Activated CD4-positive, alpha-beta T cell treated with anti-CD3 and anti-CD28 coated beads, Interleukin-2, amount 10 ng/mL, durations not matched to agents 24 days and 14 days (primary cell): ENCODE measurements at regions of chr17 and their contacts with region 1.

Region 1: GRCh38 chr17:63697341-63698286 is 2.3 kb downstream of the LIMD2 start:
- DNase-seq: peak; percentile 94
- H3K4me3 Mint-ChIP-seq: peak overlapping the region; percentile 93
- H3K27ac Mint-ChIP-seq: peak overlapping the region; percentile 93
- H3K4me1 Mint-ChIP-seq: peaks cover 43% of the 10 kb centered on the region
- H3K27me3 Mint-ChIP-seq: no peaks in the 10 kb centered on the region

Region 2: GRCh38 chr17:63512896-63513644 is 184.5 kb before region 1 on chr17:
- intact Hi-C with region 1: no loop called
- DNase-seq: no peak
- H3K4me3 Mint-ChIP-seq: no peak overlapping the region
- H3K27ac Mint-ChIP-seq: no peak overlapping the region
- H3K4me1 Mint-ChIP-seq: peaks cover 6% of the 10 kb centered on the region
- H3K27me3 Mint-ChIP-seq: peaks cover 3% of the 10 kb centered on the region

Region 3: GRCh38 chr17:63621766-63622519 is 75.7 kb before region 1 on chr17 and contains the start of gene MAP3K3:
- intact Hi-C with region 1: loop called (anchors 1 kb)
- DNase-seq: peak; percentile 99
- H3K4me3 Mint-ChIP-seq: peak within 1 kb of the TSS; percentile 99
- H3K27ac Mint-ChIP-seq: peak within 1 kb of the TSS; percentile 96
- H3K4me1 Mint-ChIP-seq: peaks cover 30% of the 10 kb centered on the region
- H3K27me3 Mint-ChIP-seq: peaks cover 11% of the 10 kb centered on the region
- total RNA-seq, gene MAP3K3: 26.2 and 26.7 TPM in 2 replicates

Region 4: DNA sequence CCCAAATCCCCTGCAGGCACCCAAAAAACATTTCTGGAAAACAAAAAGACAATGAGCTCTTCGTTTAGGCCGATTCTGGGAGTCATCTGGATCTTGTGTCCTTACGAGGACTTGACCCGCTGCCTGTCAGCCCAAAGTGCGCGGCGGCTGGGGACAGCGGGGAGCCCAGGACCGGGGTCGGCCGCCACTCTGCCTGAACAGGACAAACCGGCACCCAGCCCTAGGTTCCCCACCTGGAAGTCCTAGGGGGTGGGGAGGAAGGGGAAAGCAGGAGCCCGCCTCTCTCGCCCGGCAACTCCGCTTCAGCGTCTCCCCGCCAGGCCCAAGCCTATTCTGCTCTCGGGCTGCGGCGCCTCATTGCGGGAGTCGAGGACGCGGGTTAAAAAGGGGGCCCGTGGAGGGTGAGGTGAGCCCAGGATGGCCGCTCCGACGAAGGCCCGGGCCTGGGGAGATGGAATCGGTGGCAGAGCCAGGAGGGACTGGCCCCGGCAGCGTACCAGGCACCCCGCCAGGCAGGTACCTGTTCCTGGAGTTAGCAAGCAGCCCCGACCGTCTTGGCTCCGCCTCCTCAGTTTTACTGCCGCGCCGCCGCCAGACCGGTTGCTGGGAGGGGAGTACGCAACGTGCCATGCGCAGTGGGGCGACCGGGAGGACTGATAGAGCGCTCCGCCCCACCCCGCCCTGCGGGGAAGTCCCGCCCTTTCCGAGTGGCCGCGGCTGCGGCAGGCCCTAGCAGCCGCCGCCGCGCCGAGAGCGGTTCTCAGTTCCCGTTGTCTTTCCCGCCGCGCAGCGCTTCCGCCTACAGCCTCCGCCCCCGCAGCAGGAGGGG is 43.8 kb after region 1 on chr17 and contains the start of gene STRADA:
- intact Hi-C with region 1: loop called (anchors 1 kb)
- DNase-seq: peak; percentile 100
- H3K4me3 Mint-ChIP-seq: peak within 1 kb of the TSS; percentile 92
- H3K27ac Mint-ChIP-seq: peak within 1 kb of the TSS; percentile 96
- H3K4me1 Mint-ChIP-seq: peaks cover 26% of the 10 kb centered on the region
- H3K27me3 Mint-ChIP-seq: no peaks in the 10 kb centered on the region
- total RNA-seq, gene STRADA: 50.4 and 54.6 TPM in 2 replicates

Region 5: DNA sequence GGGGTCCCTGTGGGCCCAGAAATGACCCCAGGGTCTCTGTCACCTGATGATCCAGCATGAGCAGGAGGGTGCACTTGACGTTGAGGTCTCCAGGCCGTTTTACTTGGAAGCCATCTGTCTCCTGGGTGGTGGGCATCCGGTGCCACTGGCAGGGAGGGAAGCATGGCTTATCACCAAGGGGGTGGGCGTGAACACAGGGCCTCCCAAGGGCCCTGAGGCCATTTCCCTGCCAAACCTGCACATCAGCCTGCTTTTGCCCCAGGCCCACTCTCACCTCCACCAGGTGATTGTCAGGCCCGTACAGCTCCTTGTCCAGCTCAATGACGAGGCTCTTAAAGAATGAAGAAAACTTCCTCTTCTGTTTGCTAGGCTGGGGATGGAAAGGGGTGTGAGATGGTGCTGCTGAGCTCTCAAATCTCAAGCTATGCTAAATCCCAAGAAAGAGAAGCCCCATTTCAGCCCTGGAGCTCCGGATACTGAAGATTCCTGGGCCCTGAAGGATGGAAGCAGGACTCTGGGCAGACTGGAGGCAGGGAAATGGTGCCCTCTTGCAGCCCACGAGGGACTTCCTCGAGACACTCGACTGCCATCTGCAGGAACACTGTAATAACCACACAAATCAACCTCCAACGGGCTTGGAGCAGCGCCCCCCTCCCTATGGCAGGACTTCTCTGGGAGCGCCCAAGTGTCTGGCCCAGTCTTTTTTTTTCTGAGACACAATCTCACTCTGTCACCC is 137.0 kb after region 1 on chr17:
- intact Hi-C with region 1: loop called (anchors 2 kb)
- DNase-seq: peak; percentile 90
- H3K4me3 Mint-ChIP-seq: no peak overlapping the region
- H3K27ac Mint-ChIP-seq: peak overlapping the region; percentile 85
- H3K4me1 Mint-ChIP-seq: peaks cover 34% of the 10 kb centered on the region
- H3K27me3 Mint-ChIP-seq: no peaks in the 10 kb centered on the region